ENCODE measurements at regions of chr3 and their contacts with region 1.

Region 1: GRCh38 chr3:167734498-167735232 is at the start of gene PDCD10:
- DNase-seq: peak; percentile 87
- ATAC-seq: peak; percentile 87
- H3K4me3 Mint-ChIP-seq: no peak within 1 kb of the TSS
- H3K27ac Mint-ChIP-seq: no peak within 1 kb of the TSS
- H3K4me1 Mint-ChIP-seq: peaks cover 27% of the 10 kb centered on the region
- H3K27me3 Mint-ChIP-seq: no peaks in the 10 kb centered on the region
- CTCF ChIP-seq: no peak
- total RNA-seq, gene PDCD10: 54.0 and 54.8 TPM in 2 replicates

Region 2: DNA sequence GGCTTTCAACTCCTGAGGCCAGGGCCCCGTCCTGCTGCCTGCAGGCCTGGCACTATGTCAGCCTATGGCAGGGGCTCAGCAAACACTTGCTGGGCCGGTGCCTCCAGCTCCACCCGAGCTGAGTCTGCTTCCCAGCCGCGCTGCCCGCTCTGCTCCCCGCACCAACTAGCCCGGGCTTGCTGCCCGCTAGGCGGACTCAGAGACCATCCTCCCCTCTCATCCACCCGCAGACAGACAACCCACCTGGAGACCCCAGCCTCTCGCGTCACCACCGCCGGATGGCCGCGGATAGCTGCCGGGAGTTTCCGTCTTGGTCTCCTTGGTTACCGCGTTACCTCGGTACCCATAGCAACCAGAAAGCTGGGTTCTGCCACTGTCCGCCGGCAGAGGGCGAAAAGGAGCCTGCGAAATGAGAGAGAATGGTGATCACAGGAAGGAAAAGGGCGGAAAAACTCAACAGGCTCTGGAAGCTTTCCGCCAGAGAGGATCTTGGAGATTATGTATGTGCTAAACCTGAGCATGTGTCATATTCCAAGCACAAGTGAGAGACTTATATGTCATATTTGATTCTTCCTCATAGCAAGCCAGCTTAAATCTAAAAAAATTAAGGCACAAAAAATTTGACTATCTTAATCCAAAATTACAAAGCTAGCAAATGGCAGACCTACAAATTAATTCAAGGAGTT is 354.5 kb before region 1 on chr3 and contains the start of gene ZBBX:
- CTCF ChIA-PET with region 1: interaction called, 22 read pairs
- POLR2A ChIA-PET with region 1: interaction called, 3 read pairs
- intact Hi-C with region 1: loop called (anchors 2 kb)
- DNase-seq: peak; percentile 79
- ATAC-seq: peak; percentile 95
- H3K4me3 Mint-ChIP-seq: peak within 1 kb of the TSS; percentile 86
- H3K27ac Mint-ChIP-seq: peak within 1 kb of the TSS; percentile 53
- H3K4me1 Mint-ChIP-seq: peaks cover 6% of the 10 kb centered on the region
- H3K27me3 Mint-ChIP-seq: peaks cover 3% of the 10 kb centered on the region
- CTCF ChIP-seq: peak; percentile 38
- total RNA-seq, gene ZBBX: not detected in 2 replicates

Region 3: GRCh38 chr3:167691366-167691765 is 43.3 kb before region 1 on chr3:
- CTCF ChIA-PET with region 1: no interaction called
- POLR2A ChIA-PET with region 1: interaction called, 9 read pairs
- intact Hi-C with region 1: loop called (anchors 1 kb)
- DNase-seq: no peak
- ATAC-seq: peak; percentile 99
- H3K4me3 Mint-ChIP-seq: peak overlapping the region; percentile 41
- H3K27ac Mint-ChIP-seq: peak overlapping the region; percentile 24
- H3K4me1 Mint-ChIP-seq: peaks cover 20% of the 10 kb centered on the region
- H3K27me3 Mint-ChIP-seq: no peaks in the 10 kb centered on the region
- CTCF ChIP-seq: no peak

Region 4: DNA sequence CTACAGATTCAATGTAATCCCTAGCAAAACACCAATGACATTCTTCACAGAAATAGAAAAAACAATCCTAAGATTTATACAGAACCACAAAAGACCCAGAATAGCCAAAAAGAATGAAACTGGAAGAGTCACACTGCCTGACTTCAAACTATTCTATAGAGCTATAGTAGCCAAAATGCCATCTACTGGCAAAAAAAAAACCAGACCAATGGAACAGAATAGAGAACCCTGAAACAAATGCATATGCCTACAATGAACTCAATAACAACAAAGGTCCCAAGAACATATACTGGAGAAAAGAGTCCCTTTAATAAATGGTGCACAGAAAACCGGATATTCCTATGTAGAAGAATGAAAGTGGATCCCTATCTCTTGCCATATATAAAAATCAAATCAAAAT is 19.8 kb before region 1 on chr3:
- CTCF ChIA-PET with region 1: no interaction called
- POLR2A ChIA-PET with region 1: no interaction called
- intact Hi-C with region 1: loop called (anchors 1 kb)
- DNase-seq: no peak
- ATAC-seq: no peak
- H3K4me3 Mint-ChIP-seq: no peak overlapping the region
- H3K27ac Mint-ChIP-seq: no peak overlapping the region
- H3K4me1 Mint-ChIP-seq: peaks cover 38% of the 10 kb centered on the region
- H3K27me3 Mint-ChIP-seq: no peaks in the 10 kb centered on the region
- CTCF ChIP-seq: no peak

Region 5: GRCh38 chr3:167750272-167750971 is 15.8 kb after region 1 on chr3:
- CTCF ChIA-PET with region 1: interaction called, 19 read pairs
- POLR2A ChIA-PET with region 1: interaction called, 21 read pairs
- intact Hi-C with region 1: loop called (anchors 1 kb)
- DNase-seq: no peak
- ATAC-seq: peak; percentile 86
- H3K4me3 Mint-ChIP-seq: peak overlapping the region; percentile 76
- H3K27ac Mint-ChIP-seq: peak overlapping the region; percentile 88
- H3K4me1 Mint-ChIP-seq: peaks cover 88% of the 10 kb centered on the region
- H3K27me3 Mint-ChIP-seq: no peaks in the 10 kb centered on the region
- CTCF ChIP-seq: no peak

Region 6: DNA sequence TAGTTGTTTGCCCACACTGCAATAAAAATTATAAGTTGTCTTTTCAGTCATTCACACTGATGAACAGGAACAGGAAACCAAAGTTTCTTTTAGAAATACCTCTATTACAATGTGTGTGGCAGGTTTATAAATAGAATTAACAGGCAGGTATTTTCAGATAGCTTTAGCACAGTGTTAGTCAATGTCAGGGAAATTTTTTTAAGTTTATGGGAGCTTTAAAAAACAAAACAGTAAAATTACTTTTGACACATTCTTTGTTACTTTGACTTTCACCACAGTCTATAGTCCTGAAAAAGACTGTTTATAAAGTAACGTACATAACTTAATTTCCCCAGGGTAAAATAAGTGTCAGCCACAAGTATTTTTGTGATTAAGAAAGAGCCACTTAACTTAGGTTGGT is 38.9 kb after region 1 on chr3:
- CTCF ChIA-PET with region 1: no interaction called
- POLR2A ChIA-PET with region 1: no interaction called
- intact Hi-C with region 1: loop called (anchors 5 kb)
- DNase-seq: no peak
- ATAC-seq: no peak
- H3K4me3 Mint-ChIP-seq: peak overlapping the region; percentile 20
- H3K27ac Mint-ChIP-seq: peak overlapping the region; percentile 5
- H3K4me1 Mint-ChIP-seq: peaks cover 26% of the 10 kb centered on the region
- H3K27me3 Mint-ChIP-seq: no peaks in the 10 kb centered on the region
- CTCF ChIP-seq: no peak

Region 7: GRCh38 chr3:167843886-167844285 is 109.2 kb after region 1 on chr3:
- CTCF ChIA-PET with region 1: no interaction called
- POLR2A ChIA-PET with region 1: no interaction called
- intact Hi-C with region 1: loop called (anchors 2 kb)
- DNase-seq: no peak
- ATAC-seq: peak; percentile 79
- H3K4me3 Mint-ChIP-seq: peak overlapping the region; percentile 38
- H3K27ac Mint-ChIP-seq: peak overlapping the region; percentile 46
- H3K4me1 Mint-ChIP-seq: peaks cover 34% of the 10 kb centered on the region
- H3K27me3 Mint-ChIP-seq: no peaks in the 10 kb centered on the region
- CTCF ChIP-seq: no peak